Cardiac septum (tissue), 1 donor: ENCODE measurements at regions of chr3 and their contacts with region 1.

Region 1: GRCh38 chr3:187738331-187739093 is 6.8 kb downstream of the BCL6 start:
- DNase-seq: peak; percentile 93

Region 2: DNA sequence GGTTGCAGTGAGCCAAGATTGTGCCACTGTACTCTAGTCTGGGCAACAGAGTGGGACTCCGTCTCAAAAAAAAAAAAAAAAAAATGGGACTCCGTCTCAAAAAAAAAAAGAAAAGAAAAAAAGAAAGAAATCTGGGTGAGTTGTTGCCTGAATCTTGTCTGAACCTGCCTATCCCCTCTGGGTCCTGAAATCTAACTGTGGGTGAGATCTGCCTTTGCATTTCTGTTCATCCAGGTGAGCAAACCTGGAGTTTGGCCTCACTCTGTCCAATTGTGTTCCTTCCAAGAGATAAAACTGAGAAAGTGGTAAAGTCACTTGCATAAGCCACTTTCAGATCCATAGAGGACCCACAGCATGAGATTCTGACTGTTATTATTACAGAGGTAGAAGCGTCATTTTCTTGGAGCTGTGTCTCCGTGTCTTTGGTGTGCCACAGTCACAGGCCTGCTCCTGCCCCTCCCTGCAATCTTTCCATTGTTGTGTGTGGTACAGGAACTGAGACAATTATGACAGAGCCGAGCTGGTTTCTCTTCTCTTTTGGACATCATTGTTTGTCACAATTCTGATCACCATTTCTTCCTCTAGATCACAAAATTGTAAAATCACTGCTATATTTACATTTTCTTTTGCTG is 651.3 kb after region 1 on chr3:
- intact Hi-C with region 1: loop called (anchors 1 kb)
- DNase-seq: peak; percentile 78

Region 3: DNA sequence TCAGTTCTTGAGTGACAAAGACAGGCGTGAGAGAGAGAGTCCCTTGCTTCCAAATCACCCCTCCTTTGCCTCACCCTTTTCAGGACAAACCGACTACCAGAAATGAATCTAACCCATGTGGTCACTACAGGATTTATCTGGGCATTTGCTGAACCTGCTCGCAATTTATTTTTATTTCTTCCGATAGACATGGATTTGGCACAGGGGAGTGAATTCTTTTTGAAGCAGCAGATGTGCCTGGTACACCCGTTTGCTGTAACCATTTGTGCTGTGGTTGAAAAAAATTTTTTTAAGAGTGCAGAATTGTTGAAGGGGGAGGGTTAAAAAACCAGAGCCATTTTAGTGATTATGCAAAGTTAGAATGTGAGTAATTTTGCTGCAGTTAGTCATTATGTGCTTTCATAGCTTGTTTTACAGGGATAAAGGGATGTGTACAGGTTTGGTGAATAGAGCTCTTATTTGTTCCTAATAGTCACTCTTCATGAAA is 857.4 kb after region 1 on chr3:
- intact Hi-C with region 1: loop called (anchors 5 kb)
- DNase-seq: no peak

Region 4: GRCh38 chr3:188947401-188948280 is 1209.1 kb after region 1 on chr3:
- intact Hi-C with region 1: loop called (anchors 2 kb)
- DNase-seq: peak; percentile 93

Region 5: DNA sequence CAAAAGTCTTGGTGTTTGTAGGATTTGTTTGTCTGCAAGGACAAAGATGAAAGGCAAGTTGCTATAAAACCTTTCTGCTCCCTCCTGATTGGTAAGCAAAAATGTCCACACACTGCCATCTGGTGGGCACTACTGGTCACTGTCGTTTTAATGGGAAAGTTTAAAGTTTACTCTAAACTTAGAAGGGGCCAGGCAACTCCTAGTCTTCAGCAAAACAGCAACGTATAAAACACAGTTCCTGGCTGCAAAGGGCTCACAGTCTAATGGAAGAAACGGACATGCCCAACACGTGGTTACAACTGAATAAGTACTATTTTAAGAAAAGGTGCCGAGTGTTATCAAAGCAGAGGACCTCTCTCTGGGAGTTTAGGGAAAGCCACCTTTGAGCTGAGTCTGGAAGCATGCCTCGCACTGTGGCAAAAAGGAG is 1409.6 kb after region 1 on chr3:
- intact Hi-C with region 1: loop called (anchors 1 kb)
- DNase-seq: peak; percentile 77